ENCODE measurements at regions of chr9 and their contacts with region 1.

Region 1: DNA sequence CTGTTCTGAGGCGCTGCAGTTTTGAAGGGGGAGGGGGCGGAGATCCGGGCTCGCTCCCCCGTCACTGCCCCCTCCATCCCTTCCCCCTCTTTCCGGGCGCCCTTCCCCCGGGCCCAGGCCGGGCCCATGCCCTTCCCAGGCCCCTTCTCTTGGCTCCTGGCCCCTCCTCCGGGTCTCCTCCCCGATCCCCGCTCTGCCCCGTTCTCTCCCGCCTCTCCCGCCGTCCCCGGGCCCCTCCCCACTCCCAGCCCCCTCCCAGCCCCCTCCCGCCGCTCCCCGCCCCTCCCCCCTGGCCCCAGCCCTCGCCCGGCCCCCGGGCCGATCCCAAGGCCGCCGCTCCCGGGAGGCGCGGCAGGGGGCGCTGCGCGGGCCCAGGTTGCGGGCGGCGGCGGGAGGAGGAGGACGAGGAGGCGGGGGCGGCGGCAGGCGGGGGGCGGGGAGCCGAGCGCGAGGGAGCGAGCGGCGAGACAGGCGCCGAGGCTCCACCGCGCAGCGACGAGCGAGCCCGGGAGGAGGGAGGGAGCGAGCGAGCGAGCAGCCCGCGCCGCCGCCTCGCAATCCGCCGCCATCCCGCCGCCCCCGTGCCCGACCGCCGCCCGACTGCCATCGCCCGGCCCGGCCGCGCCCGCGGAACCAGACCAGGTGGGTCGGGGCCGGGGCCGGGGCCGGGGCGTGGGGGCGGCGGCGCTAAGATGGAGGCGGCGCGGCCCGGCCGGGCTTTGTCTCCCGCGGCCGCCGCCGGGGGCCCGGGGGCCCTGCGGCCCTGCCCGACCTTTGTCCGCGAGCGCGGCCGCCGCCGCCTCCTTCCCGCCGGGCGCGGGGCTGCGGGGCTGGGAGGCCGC is at the start of gene PRRC2B:
- DNase-seq: peak; percentile 91
- ATAC-seq: peak; percentile 61
- H3K4me3 Mint-ChIP-seq: peak within 1 kb of the TSS; percentile 90
- H3K27ac Mint-ChIP-seq: peak within 1 kb of the TSS; percentile 97
- H3K4me1 Mint-ChIP-seq: peaks cover 47% of the 10 kb centered on the region
- H3K27me3 Mint-ChIP-seq: no peaks in the 10 kb centered on the region
- CTCF ChIP-seq: no peak
- total RNA-seq, gene PRRC2B: 170 and 206 TPM in 2 replicates

Region 2: GRCh38 chr9:131277910-131278701 is 115.7 kb before region 1 on chr9:
- CTCF ChIA-PET with region 1: no interaction called
- POLR2A ChIA-PET with region 1: interaction called, 6 read pairs
- intact Hi-C with region 1: loop called (anchors 5 kb)
- DNase-seq: peak; percentile 48
- ATAC-seq: peak; percentile 48
- H3K4me3 Mint-ChIP-seq: peak overlapping the region; percentile 91
- H3K27ac Mint-ChIP-seq: peak overlapping the region; percentile 80
- H3K4me1 Mint-ChIP-seq: peaks cover 37% of the 10 kb centered on the region
- H3K27me3 Mint-ChIP-seq: peaks cover 12% of the 10 kb centered on the region
- CTCF ChIP-seq: no peak

Region 3: DNA sequence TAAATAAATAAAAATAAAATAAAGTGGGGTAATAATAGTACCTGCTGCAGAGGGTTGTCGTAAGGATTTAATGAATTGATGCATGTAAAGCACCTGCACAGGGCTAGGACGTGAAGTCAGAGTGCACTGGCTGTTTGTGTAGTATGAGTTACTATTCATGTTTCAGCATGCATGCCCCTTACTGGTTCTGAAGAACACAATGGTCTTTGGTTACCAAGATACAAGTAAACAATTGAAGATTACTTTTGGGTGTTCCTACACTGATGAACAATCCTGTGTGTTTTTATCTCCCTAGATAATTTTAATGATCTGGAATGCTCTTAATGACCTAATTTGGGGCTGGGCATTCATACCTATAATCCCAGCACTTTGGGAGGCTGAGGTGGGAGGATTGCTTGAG is 23.2 kb before region 1 on chr9:
- CTCF ChIA-PET with region 1: no interaction called
- POLR2A ChIA-PET with region 1: interaction called, 17 read pairs
- intact Hi-C with region 1: loop called (anchors 1 kb)
- DNase-seq: no peak
- ATAC-seq: no peak
- H3K4me3 Mint-ChIP-seq: no peak overlapping the region
- H3K27ac Mint-ChIP-seq: no peak overlapping the region
- H3K4me1 Mint-ChIP-seq: peaks cover 22% of the 10 kb centered on the region
- H3K27me3 Mint-ChIP-seq: no peaks in the 10 kb centered on the region
- CTCF ChIP-seq: no peak

Region 4: DNA sequence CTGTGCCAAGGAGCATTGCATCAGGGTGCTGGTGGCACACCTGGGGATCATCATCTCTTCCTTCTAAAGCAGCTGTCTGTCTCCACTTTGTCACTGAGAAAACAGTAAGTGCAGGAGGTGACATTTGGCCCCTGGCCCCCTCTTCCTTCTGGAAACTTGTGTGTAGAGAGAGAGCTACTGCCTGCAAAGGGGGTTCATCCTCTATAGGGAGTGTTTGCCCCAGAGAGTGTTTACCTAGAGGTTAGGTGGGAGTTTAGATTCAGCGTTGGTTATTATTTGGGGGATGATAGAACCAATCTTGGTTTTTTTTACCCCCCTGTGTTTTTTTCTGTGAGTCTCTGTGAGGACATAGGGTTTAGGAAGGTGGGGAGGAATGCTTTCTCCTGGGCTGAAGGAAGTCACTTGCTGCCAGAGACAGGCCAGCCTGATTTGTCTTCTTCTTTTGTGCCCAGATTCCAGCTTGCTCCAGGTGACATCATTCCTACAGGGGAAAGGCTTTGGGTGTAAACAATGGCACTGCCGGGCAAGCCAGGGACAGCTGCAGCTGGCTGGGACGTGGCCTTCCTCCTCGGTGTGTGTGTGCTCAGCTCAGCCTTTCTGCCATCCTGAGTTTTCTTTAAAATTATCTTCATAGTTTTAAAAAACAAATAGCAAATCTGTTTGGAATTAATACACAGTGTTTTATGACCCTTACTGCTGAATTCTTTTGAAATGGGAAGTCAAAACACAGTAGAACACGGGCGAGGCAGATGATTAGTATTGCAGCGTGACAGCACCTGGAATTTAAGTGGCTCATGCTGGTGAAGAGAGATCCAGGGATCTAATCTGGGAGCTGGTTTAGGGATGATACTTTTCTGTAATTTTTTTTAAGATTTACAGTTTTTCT is 24.5 kb after region 1 on chr9:
- CTCF ChIA-PET with region 1: no interaction called
- POLR2A ChIA-PET with region 1: interaction called, 10 read pairs
- intact Hi-C with region 1: no loop called
- DNase-seq: no peak
- ATAC-seq: no peak
- H3K4me3 Mint-ChIP-seq: peak overlapping the region; percentile 68
- H3K27ac Mint-ChIP-seq: peak overlapping the region; percentile 79
- H3K4me1 Mint-ChIP-seq: peaks cover 87% of the 10 kb centered on the region
- H3K27me3 Mint-ChIP-seq: no peaks in the 10 kb centered on the region
- CTCF ChIP-seq: no peak

Region 5: DNA sequence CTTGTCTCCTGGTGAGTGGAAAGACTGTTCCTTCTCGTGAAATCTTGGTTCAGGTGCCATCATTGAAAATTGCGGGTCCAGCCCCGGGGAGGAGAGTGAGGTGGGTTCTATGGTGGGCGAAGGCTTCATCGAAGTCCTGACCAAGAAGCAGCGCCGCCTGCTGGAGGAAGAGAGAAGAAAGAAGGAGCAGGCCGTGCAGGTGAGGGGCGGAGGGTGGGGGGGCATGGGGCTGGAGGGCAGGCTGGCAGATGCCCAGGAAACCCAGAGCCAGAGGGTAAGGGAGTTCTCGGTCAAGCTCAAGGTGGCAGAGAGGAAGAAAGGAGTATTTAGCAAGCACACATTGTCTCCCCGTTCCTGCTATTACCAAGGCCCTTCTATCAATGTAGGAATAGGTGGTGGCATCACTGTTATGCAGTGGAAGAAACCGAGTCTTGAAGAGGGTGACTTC is 84.6 kb after region 1 on chr9:
- CTCF ChIA-PET with region 1: interaction called, 3 read pairs
- POLR2A ChIA-PET with region 1: no interaction called
- intact Hi-C with region 1: loop called (anchors 2 kb)
- DNase-seq: peak; percentile 56
- ATAC-seq: peak; percentile 57
- H3K4me3 Mint-ChIP-seq: no peak overlapping the region
- H3K27ac Mint-ChIP-seq: peak overlapping the region; percentile 18
- H3K4me1 Mint-ChIP-seq: no peaks in the 10 kb centered on the region
- H3K27me3 Mint-ChIP-seq: no peaks in the 10 kb centered on the region
- CTCF ChIP-seq: no peak

Region 6: DNA sequence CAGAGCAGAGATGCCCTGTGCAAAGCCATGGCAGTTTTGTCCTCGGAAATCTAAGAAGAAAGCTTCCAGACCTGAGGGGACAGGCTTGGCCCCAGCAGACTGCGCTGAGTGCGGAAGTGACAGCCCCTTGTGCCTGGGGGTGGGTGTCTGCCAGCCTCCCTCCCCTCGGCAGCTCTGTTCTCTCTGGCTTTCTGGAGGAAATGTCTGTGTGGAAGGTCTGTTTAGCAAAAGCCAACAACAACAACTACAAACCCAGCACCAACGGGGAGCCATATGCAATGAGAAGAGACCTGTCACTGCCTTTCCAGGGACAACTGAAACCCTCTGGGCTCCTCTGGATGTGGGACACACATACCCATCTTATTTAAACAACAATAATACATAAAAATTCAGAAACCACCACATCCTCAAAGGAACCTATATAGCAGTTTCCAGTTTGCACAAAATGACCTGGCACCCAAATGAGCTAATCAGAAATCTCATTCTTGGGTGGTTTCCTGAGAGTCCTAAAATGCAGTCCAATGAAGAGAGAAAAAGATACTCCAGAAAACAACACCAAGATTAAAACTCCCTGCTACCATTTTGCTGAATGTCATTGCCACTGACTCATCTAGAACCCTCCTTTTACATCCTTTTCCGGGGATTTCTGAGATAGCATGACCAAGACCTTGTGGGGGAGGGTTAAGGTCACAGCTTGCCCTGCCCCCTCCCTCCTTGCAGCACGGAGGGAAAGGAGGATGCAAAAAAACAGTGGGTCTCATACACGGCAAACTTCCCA is 1386.6 kb after region 1 on chr9:
- CTCF ChIA-PET with region 1: no interaction called
- POLR2A ChIA-PET with region 1: no interaction called
- intact Hi-C with region 1: no loop called
- DNase-seq: no peak
- ATAC-seq: no peak
- H3K4me3 Mint-ChIP-seq: no peak overlapping the region
- H3K27ac Mint-ChIP-seq: no peak overlapping the region
- H3K4me1 Mint-ChIP-seq: peaks cover 9% of the 10 kb centered on the region
- H3K27me3 Mint-ChIP-seq: peaks cover 22% of the 10 kb centered on the region
- CTCF ChIP-seq: no peak

Measured in activated B cell treated with CpG ODN at 0.5 μM for 24 hours (primary cell).